K562 (cell line): ENCODE measurements at regions of chr17 and their contacts with region 1.

Region 1: DNA sequence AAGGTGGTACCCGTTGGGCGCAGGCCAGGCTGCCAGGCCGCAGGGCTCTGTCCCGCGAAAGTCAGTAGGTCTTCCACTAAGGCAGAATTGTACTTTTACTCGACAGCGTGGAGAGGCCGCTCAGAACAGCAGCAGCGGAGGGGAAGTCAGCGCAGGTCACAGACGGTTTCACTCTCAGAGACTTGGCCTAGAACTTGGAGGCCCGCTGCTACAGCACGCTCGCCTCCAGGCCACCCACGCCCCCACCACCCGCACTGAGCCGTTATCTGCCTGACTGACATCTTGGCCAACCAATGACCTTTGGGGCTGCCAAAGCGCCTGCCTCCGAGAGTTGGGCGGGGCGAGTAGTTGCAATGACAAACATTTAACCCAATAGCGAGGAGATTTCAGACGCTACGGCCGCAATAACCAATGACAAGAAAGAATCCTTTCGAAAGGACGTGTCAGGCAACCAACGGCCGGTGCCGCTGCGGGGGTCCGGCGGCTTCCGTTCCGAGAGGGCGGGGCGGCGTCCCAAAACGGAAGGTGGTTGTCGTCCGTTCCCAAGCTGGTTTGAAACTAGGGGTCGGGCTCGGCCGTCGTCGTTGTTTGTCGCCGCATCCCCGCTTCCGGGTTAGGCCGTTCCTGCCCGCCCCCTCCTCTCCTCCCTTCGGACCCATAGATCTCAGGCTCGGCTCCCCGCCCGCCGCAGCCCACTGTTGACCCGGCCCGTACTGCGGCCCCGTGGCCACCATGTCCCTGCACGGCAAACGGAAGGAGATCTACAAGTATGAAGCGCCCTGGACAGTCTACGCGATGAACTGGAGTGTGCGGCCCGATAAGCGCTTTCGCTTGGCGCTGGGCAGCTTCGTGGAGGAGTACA is at the start of gene DCAF7:
- DNase-seq: peak; percentile 99 to 100 (median 100)
- ATAC-seq: peak; percentile 92
- H3K4me3 ChIP-seq: peak within 1 kb of the TSS; percentile 85
- H3K27ac ChIP-seq: peak within 1 kb of the TSS; percentile 97
- H3K4me1 ChIP-seq: peaks cover 12 to 22% of the 10 kb centered on the region in 2 experiments
- H3K27me3 ChIP-seq: no peaks in the 10 kb centered on the region
- CTCF ChIP-seq: peak in 1 of 3 experiments; percentile 5; a peak in 1 of 6 replicates
- EP300 ChIP-seq: no peak
- POLR2A ChIP-seq: peak; percentile 90
- RAD21 ChIP-seq: no peak
- polyA plus RNA-seq, gene DCAF7: 35.9 to 38.0 TPM

Region 2: DNA sequence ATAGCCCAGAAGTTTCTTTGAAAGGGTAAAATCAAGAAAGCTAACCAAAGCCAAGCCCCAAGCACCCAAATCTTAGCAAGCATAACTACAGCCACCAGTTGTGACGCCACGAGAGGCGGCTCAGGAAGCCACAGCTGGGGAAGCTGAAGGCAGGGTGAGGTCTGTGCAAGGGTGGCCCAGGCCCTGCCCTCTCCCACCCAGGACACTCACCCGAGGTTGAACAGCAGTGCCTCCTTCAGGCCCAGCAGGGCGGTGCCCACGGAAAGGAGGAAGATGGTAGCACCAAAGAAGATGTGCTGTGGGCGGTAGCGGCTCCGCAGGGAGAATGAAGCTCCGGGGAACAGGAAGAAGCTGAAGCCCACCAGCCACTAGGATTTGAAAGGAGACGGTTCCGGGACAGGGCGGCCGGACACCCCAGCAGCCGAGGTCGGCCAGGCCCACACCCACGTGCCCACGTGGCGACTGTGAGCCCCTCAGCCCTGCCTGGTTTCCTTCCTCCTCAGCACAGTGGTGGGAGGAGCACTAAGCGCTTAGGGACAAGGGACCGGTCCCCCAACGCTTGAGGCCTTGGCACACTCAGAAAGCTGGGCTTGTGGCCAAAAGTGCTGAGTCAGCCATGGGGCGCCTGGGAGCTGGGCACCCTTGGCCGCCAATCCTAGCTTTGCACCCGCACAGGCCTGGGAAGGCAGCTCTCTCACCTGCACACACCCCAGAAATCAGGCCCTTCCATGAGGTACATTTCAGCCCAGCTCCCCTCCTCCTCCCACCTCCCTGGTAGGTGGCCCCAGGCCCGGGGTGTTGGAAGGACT is 115.1 kb before region 1 on chr17:
- CTCF ChIA-PET with region 1: no interaction called
- POLR2A ChIA-PET with region 1: interaction called, 4 read pairs
- in situ Hi-C with region 1: no loop called
- intact Hi-C with region 1: loop called (anchors 5 kb)
- DNase-seq: no peak
- ATAC-seq: no peak
- H3K4me3 ChIP-seq: no peak overlapping the region
- H3K27ac ChIP-seq: peak overlapping the region; percentile 12; the same call in 1 of the 3 replicates
- H3K4me1 ChIP-seq: peaks cover 59 to 74% of the 10 kb centered on the region in 2 experiments
- H3K27me3 ChIP-seq: no peaks in the 10 kb centered on the region
- CTCF ChIP-seq: peak; percentile 34 to 43 (median 40); a peak in 4 of 6 replicates
- EP300 ChIP-seq: no peak
- POLR2A ChIP-seq: no peak
- RAD21 ChIP-seq: peak in 1 of 2 experiments; percentile 19; a peak in 1 of 4 replicates

Region 3: DNA sequence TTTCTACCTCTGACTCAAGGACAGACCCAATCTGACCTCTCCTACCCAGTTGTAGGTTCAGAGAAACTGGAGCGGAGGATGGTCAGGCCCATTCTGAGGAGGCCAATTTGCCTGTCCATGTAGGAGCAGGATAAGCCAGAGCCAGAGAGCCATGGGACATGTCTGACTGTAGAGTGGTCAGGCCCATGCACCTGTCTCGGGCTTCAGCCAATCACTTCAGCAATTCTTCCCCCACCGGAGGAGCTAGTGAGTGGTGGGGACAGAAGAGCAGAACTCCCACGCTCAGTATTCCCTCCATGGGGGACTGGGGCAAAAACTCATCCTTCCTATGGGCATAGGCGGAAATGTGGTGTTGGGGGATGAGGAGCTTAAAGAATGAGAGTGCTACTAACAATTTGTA is 14.4 kb after region 1 on chr17:
- CTCF ChIA-PET with region 1: no interaction called
- POLR2A ChIA-PET with region 1: interaction called, 20 read pairs
- in situ Hi-C with region 1: no loop called
- intact Hi-C with region 1: no loop called
- DNase-seq: no peak
- ATAC-seq: peak; percentile 50; the same call in 2 of the 3 replicates
- H3K4me3 ChIP-seq: no peak overlapping the region
- H3K27ac ChIP-seq: no peak overlapping the region
- H3K4me1 ChIP-seq: no peaks in the 10 kb centered on the region; a peak in 1 of 5 replicates
- H3K27me3 ChIP-seq: no peaks in the 10 kb centered on the region
- CTCF ChIP-seq: no peak
- EP300 ChIP-seq: no peak
- POLR2A ChIP-seq: no peak
- RAD21 ChIP-seq: no peak

Region 4: DNA sequence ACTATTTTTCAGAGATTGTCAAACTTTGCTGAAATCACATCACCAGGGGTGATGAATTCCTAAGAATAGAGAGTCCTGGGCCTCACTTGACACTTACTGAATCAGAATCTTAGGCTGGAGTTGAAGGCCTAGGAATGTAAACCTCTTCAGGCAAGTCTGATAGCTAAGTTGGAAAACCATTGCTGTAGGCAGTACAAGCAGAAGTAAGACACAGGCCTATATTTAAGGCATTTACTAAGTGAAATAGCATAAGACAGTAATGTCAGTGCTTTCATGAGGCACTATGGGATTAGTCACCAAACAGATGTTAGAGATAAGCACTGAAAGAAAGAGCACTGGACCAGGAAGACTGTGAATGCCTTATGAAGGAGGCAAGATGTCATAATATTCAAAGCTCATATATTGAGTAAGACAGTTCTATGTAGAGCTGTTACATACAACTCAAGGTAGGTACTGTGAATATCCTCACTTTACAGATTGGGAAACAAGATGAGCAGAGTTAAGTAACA is 21.6 kb after region 1 on chr17:
- CTCF ChIA-PET with region 1: no interaction called
- POLR2A ChIA-PET with region 1: interaction called, 20 read pairs
- in situ Hi-C with region 1: no loop called
- intact Hi-C with region 1: no loop called
- DNase-seq: peak; percentile 46 to 67 (median 57)
- ATAC-seq: peak; percentile 89
- H3K4me3 ChIP-seq: no peak overlapping the region
- H3K27ac ChIP-seq: peak overlapping the region; percentile 3; the same call in 1 of the 3 replicates
- H3K4me1 ChIP-seq: peaks cover 5% of the 10 kb centered on the region in 2 experiments; a peak in 2 of 5 replicates
- H3K27me3 ChIP-seq: no peaks in the 10 kb centered on the region
- CTCF ChIP-seq: no peak
- EP300 ChIP-seq: no peak
- POLR2A ChIP-seq: no peak
- RAD21 ChIP-seq: no peak

Region 5: GRCh38 chr17:63600569-63601438 is 50.6 kb after region 1 on chr17 and contains the start of gene TACO1:
- CTCF ChIA-PET with region 1: no interaction called
- POLR2A ChIA-PET with region 1: interaction called, 3 read pairs
- in situ Hi-C with region 1: no loop called
- intact Hi-C with region 1: loop called (anchors 5 kb)
- DNase-seq: peak; percentile 89 to 92 (median 92)
- ATAC-seq: peak; percentile 98
- H3K4me3 ChIP-seq: peak within 1 kb of the TSS; percentile 76
- H3K27ac ChIP-seq: peak within 1 kb of the TSS; percentile 78
- H3K4me1 ChIP-seq: peaks cover 13 to 18% of the 10 kb centered on the region in 2 experiments; a peak in 3 of 5 replicates
- H3K27me3 ChIP-seq: no peaks in the 10 kb centered on the region
- CTCF ChIP-seq: no peak
- EP300 ChIP-seq: no peak
- POLR2A ChIP-seq: peak; percentile 87
- RAD21 ChIP-seq: peak in 1 of 2 experiments; percentile 33; a peak in 2 of 4 replicates
- polyA plus RNA-seq, gene TACO1: 10.3 to 10.4 TPM

Region 6: GRCh38 chr17:63641692-63642448 is 91.7 kb after region 1 on chr17:
- CTCF ChIA-PET with region 1: no interaction called
- POLR2A ChIA-PET with region 1: no interaction called
- in situ Hi-C with region 1: no loop called
- intact Hi-C with region 1: no loop called
- DNase-seq: no peak
- ATAC-seq: no peak
- H3K4me3 ChIP-seq: no peak overlapping the region
- H3K27ac ChIP-seq: no peak overlapping the region
- H3K4me1 ChIP-seq: no peaks in the 10 kb centered on the region
- H3K27me3 ChIP-seq: no peaks in the 10 kb centered on the region
- CTCF ChIP-seq: no peak
- EP300 ChIP-seq: no peak
- POLR2A ChIP-seq: no peak
- RAD21 ChIP-seq: no peak